ENCODE measurements at regions of chr17 and their contacts with region 1.

Region 1: DNA sequence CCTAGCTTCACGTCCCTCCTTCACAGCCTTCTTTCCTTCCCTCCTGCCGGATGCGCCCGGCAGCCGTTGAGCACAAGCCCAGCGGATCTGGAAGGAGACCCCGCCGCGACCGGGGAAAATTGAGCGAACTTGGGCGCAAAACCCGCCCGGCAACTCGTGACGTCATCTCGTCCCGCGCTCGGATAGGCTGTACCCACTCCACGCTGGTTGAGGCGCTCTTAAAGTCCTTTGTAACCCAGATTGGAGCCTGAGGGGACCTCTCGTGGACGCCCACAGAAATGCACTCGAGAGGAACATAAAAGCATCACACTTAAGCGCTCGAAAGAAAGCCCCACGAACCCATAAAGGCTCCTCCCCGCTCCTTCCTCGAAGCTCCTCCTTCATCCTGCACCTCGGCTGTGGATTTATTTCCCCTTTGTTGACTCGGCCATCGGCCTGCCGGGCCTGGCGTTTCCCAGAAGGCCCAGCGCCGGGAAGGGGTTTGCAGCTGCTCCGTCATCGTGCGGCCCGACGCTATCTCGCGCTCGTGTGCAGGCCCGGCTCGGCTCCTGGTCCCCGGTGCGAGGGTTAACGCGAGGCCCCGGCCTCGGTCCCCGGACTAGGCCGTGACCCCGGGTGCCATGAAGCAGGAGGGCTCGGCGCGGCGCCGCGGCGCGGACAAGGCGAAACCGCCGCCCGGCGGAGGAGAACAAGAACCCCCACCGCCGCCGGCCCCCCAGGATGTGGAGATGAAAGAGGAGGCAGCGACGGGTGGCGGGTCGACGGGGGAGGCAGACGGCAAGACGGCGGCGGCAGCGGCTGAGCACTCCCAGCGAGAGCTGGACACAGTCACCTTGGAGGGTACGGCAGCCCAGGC is at the start of gene PSMD3:
- DNase-seq: peak; percentile 99
- ATAC-seq: peak; percentile 98
- total RNA-seq, gene PSMD3: 68.7 TPM

Region 2: GRCh38 chr17:39704821-39705551 is 275.6 kb before region 1 on chr17:
- intact Hi-C with region 1: loop called (anchors 5 kb)
- DNase-seq: no peak
- ATAC-seq: peak; percentile 67

Region 3: GRCh38 chr17:39939588-39940419 is 40.8 kb before region 1 on chr17:
- intact Hi-C with region 1: no loop called
- DNase-seq: no peak
- ATAC-seq: peak; percentile 91

Region 4: GRCh38 chr17:39952680-39953470 is 27.7 kb before region 1 on chr17:
- intact Hi-C with region 1: loop called (anchors 2 kb)
- DNase-seq: peak; percentile 99
- ATAC-seq: peak; percentile 94

Region 5: DNA sequence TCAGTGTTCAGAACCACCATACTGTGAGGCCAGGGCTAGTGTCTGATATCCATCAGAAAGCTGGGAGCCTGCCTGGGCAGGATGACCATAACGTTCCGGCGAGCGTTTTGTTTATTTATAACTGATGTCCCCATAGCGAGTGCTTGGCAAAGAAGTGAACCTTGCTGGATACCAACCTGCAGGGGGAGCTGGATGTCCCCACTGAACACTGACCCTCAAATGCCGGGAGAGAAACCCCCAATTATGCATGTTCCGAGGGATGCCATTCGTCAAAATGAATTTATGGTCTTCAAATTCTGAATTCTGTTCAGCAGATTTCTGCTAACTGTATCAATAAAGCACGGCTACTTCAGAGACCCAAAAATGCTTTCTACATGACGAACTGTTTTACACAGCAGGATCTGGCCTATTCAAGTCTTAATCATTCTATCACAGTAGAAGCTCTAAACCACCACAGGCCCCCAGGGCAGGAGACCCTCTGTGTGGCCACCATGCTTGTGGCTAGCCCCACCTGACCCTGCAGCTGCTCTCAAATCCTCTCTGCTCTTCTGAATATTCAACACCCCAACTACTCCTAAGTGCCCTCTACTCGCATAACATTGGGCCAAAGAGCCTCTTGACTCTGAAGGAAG is 58.4 kb after region 1 on chr17:
- intact Hi-C with region 1: no loop called
- DNase-seq: no peak
- ATAC-seq: peak; percentile 97

Region 6: GRCh38 chr17:40098846-40099618 is 118.5 kb after region 1 on chr17:
- intact Hi-C with region 1: no loop called
- DNase-seq: peak; percentile 100
- ATAC-seq: peak; percentile 84

Measured in sciatic nerve (tissue), 2 donors.